Head of caudate nucleus (tissue), 42 donors: ENCODE measurements at regions of chr17 and their contacts with region 1.

Region 1: GRCh38 chr17:65100316-65101140 is 36.6 kb upstream of the RGS9 start:
- DNase-seq: peak; percentile 78 to 95 (median 90)

Region 2: GRCh38 chr17:64936133-64936532 is 164.4 kb before region 1 on chr17:
- intact Hi-C with region 1: no loop called
- DNase-seq: no peak

Region 3: GRCh38 chr17:64975329-64976087 is 125.0 kb before region 1 on chr17:
- intact Hi-C with region 1: loop called (anchors 10 kb)
- DNase-seq: peak; percentile 84 to 98 (median 94)

Region 4: GRCh38 chr17:65055348-65056261 is 44.9 kb before region 1 on chr17:
- intact Hi-C with region 1: loop called (anchors 5 kb)
- DNase-seq: peak; percentile 51 to 90 (median 78)

Region 5: DNA sequence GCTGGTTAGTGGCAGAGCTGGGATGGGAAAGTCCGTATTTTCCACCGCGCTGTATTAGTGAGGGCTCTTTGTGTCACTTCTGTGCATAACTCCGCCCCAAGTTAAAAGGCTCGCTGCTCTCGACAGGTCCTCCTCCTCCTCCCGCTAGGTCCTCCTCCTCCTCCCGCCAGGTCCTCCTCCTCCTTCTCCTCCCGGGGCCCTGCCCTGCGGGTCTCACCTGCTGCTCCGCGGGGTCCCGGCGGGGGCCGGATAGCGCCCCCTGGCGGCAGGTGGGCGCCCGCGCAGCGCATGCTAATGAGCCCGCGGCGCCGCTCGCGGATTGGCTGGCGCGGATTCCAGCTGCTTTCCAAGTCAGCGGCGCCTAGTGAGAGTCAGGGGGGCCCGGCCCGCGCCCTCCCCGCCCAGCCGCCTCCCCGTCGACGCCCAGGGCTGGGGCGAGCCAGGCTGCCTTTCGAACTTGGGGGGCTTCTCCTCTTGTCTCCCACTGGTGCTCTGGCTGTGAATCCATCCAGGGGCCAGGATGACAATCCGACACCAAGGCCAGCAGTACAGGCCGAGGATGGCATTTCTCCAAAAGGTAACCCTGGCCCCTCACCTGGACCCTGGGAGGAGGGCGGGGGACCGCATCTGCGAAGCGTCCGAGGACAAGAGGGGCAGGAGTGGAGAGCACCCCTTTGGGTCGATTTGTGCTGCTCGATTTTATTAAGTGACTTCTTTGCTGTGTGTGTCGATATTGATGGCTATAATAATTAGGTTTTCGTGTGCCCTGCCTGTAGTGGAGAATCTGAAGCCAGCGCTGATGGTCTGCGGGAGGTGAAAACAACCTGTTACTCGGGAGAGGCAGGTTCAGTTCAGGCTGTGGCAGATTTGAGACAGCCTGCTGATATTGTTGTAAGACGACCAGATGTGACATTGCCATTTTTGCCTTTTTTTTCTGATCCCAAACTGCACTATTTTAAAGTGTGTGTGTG is 36.8 kb after region 1 on chr17 and contains the start of gene RGS9:
- intact Hi-C with region 1: loop called (anchors 5 kb)
- DNase-seq: peak; percentile 78 to 95 (median 91)